Posterior vena cava (tissue), 2 donors: ENCODE measurements at regions of chr14 and their contacts with region 1.

Region 1: DNA sequence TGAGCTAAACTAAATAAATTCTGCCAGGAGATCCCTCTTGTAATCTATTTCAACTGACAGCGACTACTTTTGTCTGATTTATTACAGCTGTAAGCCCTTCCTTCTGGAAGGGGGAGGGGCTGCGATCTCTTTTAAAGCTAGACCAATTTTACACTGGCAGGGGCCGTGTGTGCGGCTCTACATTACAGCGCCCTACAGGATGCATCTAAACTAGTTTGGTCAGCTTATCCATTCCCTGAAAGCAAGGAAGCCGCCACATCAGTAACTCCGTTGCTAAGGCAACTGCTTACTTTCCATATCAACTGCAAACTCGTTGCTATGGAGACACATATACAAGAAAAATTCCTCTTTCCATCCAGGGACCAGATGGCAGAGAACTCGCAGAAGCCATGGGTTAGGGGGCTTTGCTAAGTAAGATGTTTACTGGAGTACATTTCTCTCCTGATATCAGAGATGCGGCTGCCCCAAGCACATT is 17.4 kb downstream of the FOXN3 start:
- DNase-seq: no peak

Region 2: DNA sequence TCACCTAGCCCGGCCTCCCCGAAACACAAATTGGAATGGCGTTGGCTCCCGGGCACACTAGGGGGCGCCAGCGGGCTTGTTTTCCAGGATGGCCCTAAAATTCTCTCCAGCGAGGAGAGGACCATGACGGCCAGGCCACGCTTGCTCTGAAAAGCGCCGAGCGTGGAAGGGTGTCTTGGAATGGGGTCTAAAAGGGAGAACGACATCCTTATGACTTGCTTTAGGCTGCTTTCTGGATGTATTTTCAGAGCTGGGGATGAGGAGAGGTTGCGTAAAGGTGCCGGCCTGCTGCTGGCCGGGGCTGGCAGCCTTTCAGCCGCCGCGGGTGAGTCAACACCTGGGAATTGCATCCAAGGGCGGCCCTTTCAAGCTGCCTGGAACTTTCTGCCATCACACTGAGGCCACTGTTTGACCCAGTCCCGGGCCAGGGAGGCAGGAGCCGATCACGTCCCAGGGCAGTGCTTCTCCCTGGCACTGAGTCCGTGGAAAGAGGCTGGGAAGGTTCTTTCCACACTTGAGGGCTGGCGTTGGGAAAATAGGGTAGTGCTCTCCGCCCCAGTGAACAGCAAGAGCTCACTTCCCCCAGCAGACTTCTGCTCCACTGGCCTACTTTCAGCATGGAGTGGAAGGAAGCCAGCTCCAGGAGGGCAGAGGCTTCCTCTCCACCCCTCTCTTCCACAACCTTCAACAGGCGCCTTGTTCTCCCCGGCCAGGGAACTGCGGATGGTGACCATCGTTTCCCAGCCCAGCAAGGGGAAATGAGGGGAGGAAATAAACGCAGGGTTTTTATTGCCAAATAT is 359.0 kb before region 1 on chr14:
- intact Hi-C with region 1: loop called in 1 of 2 experiments (anchors 5 kb)
- DNase-seq: peak; percentile 96

Region 3: GRCh38 chr14:89430391-89431236 is 31.0 kb after region 1 on chr14:
- intact Hi-C with region 1: no loop called
- DNase-seq: no peak

Region 4: DNA sequence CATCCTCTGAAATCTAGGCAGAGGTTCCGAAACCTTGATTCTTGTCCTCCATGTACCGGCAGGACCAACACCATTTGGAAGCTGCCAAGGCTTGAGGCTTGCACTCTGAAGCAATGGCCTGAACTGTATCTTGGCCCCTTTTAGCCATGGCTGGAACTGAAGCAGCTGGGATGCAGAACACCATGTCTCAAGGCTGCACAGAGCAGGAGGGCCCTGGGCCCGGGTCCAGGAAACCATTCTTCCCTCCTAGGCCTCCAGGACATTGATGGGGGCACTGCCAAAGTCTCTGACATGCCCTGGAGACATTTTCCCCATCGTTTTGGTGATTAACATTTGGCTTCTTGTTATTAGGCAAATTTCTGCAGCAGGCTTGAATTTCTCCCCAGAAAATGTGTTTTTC is 356.2 kb after region 1 on chr14:
- intact Hi-C with region 1: loop called in 1 of 2 experiments (anchors 5 kb)
- DNase-seq: no peak